ENCODE measurements at regions of chr17 and their contacts with region 1.

Region 1: GRCh38 chr17:28041068-28041843 is 1.2 kb upstream of the NLK start:
- DNase-seq: peak; percentile 100
- ATAC-seq: peak; percentile 97 to 99 (median 98)
- H3K4me3 ChIP-seq: peak overlapping the region; percentile 94
- H3K27ac ChIP-seq: peak overlapping the region; percentile 89
- H3K4me1 ChIP-seq: peaks cover 23% of the 10 kb centered on the region
- H3K27me3 ChIP-seq: no peaks in the 10 kb centered on the region
- CTCF ChIP-seq: no peak

Region 2: DNA sequence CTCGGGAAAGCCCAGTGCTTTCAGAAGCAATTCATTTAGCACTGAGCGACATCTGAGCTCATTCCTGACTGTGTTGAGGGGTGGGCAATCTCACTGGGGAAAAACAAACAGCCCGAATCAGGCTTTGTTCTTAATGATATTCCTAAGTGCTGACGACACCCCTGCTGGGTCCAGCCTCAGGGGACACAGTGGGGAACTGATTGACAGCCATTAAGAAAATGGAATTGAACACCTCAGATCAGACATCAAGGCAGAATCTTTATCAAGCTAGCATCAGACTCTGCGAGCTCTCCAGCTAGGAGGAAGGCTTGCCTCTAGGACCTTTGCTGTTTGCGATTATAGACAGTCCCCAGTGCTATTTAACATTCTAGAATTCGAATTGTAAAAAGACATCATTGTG is 125.5 kb before region 1 on chr17:
- intact Hi-C with region 1: no loop called
- DNase-seq: no peak
- ATAC-seq: no peak
- H3K4me3 ChIP-seq: no peak overlapping the region
- H3K27ac ChIP-seq: no peak overlapping the region
- H3K4me1 ChIP-seq: no peaks in the 10 kb centered on the region
- H3K27me3 ChIP-seq: peaks cover 0 to 9% (median 3%) of the 10 kb centered on the region in 3 donors
- CTCF ChIP-seq: no peak

Region 3: DNA sequence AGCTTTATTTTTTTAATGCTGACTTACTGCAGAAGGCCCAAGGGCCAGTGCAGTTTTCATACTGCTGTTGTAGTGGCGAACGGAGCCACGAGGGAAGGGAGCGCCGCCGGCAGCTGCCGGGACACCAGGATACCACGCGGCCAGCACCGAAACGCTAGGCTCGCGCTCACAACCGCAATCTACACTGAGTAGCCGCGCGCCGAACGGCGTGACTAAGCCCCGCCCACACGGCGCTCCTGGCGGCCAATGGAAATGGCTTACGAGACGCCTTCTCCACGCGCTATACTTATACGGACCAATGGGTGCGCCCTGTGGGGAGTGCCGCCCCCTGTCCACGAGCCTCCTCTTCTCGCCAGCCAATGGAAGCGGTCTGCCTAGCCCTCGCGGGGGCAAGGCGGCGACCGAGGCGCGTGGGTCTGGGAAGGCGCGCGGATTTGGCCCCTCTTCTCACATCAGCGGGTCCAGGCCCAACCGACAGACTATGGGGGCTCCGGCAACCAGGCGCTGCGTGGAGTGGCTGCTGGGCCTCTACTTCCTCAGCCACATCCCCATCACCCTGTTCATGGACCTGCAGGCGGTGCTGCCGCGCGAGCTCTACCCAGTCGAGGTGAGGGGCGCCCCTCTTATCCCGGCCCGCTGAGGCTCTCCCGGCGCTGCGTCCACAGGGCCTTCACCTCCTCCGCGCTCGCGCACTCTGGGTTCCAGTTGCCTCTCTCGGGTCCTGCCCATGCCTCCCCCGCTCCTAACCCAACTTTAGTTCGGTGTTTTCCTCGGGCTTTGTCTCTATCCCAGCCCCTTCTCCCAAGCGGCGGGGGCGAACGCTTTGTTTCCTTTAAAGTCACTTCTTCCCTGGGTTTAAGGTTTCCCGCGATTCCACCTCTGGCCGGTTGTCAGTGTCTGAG is 277.8 kb after region 1 on chr17 and contains the start of gene TMEM97:
- intact Hi-C with region 1: loop called in 1 of 2 experiments (anchors 5 kb)
- DNase-seq: peak; percentile 97 to 98
- ATAC-seq: peak; percentile 99 to 100 (median 99)
- H3K4me3 ChIP-seq: peak within 1 kb of the TSS; percentile 82
- H3K27ac ChIP-seq: peak within 1 kb of the TSS; percentile 59
- H3K4me1 ChIP-seq: peaks cover 14% of the 10 kb centered on the region
- H3K27me3 ChIP-seq: no peaks in the 10 kb centered on the region
- CTCF ChIP-seq: no peak
- total RNA-seq, gene TMEM97: 3.9 to 13.5 (median 9.0) TPM

Measured in psoas muscle (tissue), 8 donors.